Right cardiac atrium (tissue), 5 donors: ENCODE measurements at regions of chr11 and their contacts with region 1.

Region 1: DNA sequence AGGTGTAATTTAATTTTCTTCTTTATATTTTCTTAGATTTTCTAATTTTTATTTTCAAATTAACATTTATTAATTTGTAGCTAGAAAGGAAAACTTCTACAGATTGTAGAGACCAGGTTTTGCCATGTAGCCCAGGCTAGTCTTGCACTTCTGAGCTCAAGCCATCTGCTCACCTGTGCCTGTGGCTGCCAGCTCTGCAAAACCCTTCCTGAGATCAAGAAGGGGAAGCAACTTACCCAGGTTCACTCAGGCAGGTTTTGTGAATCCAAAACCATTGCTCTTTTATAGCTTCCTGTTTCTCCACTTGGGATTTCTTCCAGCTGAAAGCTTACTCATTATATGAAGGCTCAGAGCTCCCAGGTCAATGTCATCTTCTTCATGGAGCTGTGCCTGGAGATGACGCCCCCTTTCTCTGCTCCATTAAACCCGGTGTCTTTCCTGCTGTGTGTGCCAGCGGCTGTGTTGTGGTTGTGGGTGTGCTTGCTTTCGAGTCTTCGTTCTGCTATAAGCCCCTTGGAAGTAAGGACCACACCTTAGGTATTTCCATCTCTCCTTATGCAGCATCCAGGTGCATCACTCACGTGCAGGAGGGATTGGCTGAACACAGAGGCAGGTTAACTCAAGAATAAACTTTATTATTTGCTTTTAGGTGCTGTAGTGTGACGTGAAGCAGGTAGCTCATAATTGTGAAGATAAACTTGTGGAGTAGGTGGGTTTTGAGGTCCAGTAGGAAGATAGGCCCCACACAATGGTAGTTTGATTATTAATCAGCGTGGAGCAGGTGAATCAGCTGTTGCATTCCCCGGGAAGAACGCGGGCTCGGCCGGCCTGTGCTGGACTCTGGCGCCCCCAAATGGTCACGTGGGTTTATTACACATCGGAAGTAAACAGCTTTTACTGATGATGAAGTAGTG is 42.2 kb upstream of the INCENP start:
- DNase-seq: peak; percentile 77 to 87 (median 84)
- ATAC-seq: peak; percentile 80 to 89
- H3K4me3 ChIP-seq: no peak overlapping the region
- H3K27ac ChIP-seq: no peak overlapping the region
- H3K4me1 ChIP-seq: no peaks in the 10 kb centered on the region
- H3K27me3 ChIP-seq: no peaks in the 10 kb centered on the region

Region 2: DNA sequence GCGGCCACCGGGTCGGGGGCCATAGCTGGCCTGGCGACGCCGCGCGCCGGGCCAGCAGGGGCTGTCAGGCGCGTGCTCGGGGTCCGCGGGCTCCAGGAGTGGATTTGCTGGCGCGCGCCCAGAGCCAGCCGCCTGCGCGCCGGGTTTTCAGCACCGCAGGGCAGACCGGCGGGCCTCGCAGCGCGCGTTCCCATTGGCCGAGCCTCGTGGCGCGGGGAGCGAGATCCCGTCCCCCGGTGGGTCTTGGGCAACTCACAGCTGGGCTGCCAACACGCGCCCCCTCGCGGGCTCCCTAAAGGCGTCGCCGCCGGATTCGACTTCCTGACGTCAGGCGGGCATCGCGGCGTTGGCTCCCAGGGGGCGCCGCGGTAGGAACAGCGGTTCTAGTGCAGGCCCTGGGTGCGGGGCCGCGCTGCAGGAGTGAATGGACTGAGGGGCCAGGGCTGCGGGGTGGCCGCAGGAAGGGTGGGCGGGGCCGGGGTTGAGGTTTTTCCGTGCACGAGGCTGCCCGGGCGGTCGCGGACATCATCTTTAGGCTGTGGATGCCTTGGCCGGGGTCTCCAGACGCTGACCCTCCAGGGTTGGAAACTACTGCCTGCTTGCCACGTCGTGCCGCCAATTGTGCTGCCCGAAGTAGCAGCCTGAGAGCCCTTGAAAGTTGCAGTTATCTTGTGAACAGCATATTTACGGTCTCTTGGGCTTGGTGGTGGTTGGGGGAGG is 264.7 kb before region 1 on chr11 and contains the start of gene FADS1:
- intact Hi-C with region 1: no loop called
- DNase-seq: peak; percentile 95 to 97 (median 96)
- ATAC-seq: peak; percentile 67 to 68
- H3K4me3 ChIP-seq: peak within 1 kb of the TSS; percentile 32
- H3K27ac ChIP-seq: peak within 1 kb of the TSS; percentile 91
- H3K4me1 ChIP-seq: no peaks in the 10 kb centered on the region
- H3K27me3 ChIP-seq: no peaks in the 10 kb centered on the region
- total RNA-seq, gene FADS1: 41.3 to 45.7 (median 43.3) TPM

Region 3: DNA sequence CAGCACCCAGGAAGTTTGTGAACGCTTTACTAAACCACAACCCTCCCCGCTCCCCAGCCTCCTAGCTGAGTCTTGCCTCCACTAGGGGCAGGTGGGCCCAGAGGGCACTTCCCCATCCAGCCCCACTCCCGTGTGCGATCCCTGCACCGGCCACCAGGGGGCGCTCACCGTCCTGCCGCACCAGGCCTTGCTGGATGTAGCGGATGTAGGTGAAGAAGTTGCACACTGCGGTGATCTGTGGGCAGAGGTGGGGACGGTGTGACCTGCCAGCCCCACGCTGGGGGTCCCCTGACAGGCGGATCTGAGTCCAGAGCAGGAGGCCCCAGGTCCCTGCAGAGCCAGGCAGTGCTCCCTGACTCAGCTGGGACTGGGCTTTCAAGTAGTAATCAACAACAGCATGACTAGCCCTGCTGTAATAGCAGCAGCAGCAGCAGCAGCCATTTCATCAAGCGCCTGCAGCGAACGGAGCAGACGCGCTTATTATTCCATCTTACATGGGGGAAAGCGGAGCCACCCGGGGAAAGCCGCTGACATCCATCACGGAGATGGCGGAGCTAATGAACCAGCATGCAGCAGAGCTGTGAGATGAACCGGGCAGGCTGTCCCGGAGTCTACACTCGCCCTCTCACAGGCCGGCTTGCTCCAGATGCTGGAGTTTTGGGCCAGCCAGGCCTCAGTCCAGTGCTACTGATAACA is 182.3 kb before region 1 on chr11:
- intact Hi-C with region 1: loop called (anchors 2 to 5 kb)
- DNase-seq: peak; percentile 78 to 95 (median 93)
- ATAC-seq: peak; percentile 71 to 83
- H3K4me3 ChIP-seq: no peak overlapping the region
- H3K27ac ChIP-seq: no peak overlapping the region
- H3K4me1 ChIP-seq: no peaks in the 10 kb centered on the region
- H3K27me3 ChIP-seq: no peaks in the 10 kb centered on the region

Region 4: DNA sequence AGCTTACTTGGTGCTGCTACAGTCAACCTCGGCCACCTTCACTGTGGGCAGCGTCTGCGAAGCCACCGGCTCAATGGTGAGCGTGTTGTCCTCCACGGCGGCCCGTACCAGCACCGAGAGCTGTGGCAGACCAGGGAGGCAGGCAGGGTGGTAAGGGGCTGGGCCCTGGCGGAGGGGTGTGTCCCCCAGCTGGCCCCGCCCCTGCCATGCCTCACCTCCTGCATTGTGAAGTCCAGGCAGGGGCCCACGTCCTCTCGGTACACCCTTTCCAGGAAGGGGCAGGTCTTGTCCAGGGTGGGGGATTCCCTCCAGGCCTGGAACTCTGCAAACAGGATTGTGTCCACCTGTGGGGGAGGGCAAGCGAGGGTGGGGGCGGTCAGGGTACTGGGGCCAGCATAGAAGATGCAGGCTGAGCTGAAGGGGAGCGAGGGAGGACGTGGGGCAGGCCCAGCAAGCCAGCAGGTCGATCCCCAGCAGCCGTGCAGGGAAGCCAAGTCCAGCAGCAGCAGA is 177.0 kb before region 1 on chr11:
- intact Hi-C with region 1: loop called (anchors 2 to 5 kb)
- DNase-seq: peak in 2 of 3 donors; percentile 76 to 77
- ATAC-seq: peak; percentile 57 to 62
- H3K4me3 ChIP-seq: no peak overlapping the region
- H3K27ac ChIP-seq: no peak overlapping the region
- H3K4me1 ChIP-seq: peaks cover 3% of the 10 kb centered on the region
- H3K27me3 ChIP-seq: no peaks in the 10 kb centered on the region

Region 5: GRCh38 chr11:61954851-61955421 is 126.7 kb before region 1 on chr11:
- intact Hi-C with region 1: no loop called
- DNase-seq: peak; percentile 74 to 88 (median 87)
- ATAC-seq: peak; percentile 81 to 83
- H3K4me3 ChIP-seq: peak overlapping the region; percentile 31
- H3K27ac ChIP-seq: peak overlapping the region; percentile 42
- H3K4me1 ChIP-seq: no peaks in the 10 kb centered on the region
- H3K27me3 ChIP-seq: no peaks in the 10 kb centered on the region

Region 6: DNA sequence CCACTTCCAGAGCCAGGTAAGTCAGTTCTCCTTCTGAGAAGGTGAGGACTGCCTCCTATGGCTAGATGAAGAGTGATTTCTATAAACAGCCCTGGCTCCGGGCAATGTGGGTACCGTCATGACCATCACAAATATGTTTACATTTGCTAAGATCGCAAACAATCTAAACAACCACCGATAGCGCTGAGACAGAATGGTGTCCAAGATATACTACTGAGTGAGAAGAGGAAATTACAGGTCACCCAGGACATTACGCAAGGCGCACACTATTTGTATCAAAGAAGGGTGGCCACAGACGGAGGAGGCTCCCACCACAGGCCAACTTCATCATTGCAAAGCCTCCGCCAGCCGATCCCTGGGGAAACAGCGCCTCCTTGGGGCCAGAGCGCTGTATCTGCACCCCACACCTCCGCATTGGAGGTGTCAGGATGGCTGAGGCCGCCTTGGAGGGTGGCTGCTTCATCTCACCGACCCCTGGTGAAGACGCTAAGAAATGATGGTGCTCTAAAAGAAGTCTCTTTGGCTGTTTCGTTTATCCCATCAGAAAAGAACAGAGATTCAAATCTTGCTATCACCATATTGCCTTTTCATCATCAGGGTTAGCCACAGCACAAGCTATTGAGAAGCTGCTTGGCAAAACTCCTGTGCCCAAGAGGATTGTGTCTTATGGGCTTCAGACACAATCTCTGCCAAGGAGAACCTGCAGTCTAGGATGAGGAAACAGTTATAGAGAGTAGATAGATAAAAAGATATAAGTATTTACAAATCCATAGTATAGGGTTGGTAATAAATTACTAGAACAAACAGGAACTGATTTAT is 243.3 kb after region 1 on chr11:
- intact Hi-C with region 1: no loop called
- DNase-seq: peak; percentile 20 to 76 (median 55)
- ATAC-seq: peak in 1 of 2 donors; percentile 42
- H3K4me3 ChIP-seq: no peak overlapping the region
- H3K27ac ChIP-seq: no peak overlapping the region
- H3K4me1 ChIP-seq: no peaks in the 10 kb centered on the region
- H3K27me3 ChIP-seq: no peaks in the 10 kb centered on the region

Region 7: DNA sequence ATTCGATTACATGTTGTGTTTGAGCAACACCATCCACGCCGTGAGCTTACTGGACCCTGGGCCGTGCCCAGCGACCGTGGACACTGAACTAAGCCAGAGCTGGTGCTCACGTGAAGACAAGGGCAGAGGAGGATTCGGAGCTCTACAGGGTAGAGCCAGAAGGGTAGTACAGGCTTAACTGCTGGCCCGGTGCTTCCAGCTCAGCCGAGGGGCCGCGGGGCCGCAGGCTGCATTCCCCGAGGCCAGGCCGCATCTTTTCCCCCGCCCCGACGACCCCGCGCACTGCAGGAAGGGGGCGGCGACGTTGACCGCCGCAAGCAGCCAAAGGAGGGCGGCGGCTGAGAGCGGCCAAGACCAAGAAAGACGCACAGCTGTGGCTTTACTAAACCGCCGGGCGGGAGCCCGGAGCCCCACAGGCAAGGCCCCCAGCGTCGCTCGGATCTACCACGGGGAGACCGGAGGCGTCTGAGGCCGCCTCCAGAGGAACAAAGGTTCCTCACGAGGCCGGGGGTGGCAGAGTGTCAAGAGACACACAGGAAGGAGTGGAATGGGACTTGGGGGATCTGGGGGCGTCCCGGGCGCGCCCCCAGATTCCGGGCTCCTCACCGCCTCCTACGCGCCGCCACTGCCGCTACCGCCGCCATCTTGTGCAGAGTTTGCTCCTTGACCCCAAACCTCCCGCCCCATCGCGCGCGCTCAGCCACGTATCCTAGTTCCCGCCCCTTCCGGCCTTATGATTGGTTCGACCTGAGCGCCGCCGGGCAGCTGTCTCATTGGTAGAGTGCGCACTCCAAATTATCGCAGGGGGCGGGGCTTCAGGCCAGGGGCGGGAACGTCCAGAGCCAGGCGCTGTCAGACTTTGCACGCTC is 564.6 kb after region 1 on chr11 and contains the start of gene GANAB:
- intact Hi-C with region 1: no loop called
- DNase-seq: peak; percentile 99 to 100 (median 100)
- ATAC-seq: peak; percentile 98
- H3K4me3 ChIP-seq: peak within 1 kb of the TSS; percentile 93
- H3K27ac ChIP-seq: peak within 1 kb of the TSS; percentile 87
- H3K4me1 ChIP-seq: peaks cover 3% of the 10 kb centered on the region
- H3K27me3 ChIP-seq: no peaks in the 10 kb centered on the region
- total RNA-seq, gene GANAB: 112 to 137 (median 122) TPM